Activated CD8-positive, alpha-beta T cell treated with anti-CD3 and anti-CD28 coated beads for 36 hours (primary cell): ENCODE measurements at regions of chr18 and their contacts with region 1.

Region 1: GRCh38 chr18:26383454-26384270 is 157.4 kb downstream of the TAF4B start:
- DNase-seq: peak; percentile 2
- ATAC-seq: peak; percentile 65
- H3K4me3 Mint-ChIP-seq: no peak overlapping the region
- H3K27ac Mint-ChIP-seq: no peak overlapping the region
- H3K4me1 Mint-ChIP-seq: no peaks in the 10 kb centered on the region
- H3K27me3 Mint-ChIP-seq: no peaks in the 10 kb centered on the region
- CTCF ChIP-seq: peak; percentile 79

Region 2: GRCh38 chr18:26370037-26370436 is 13.6 kb before region 1 on chr18:
- CTCF ChIA-PET with region 1: interaction called, 17 read pairs
- POLR2A ChIA-PET with region 1: no interaction called
- intact Hi-C with region 1: no loop called
- DNase-seq: no peak
- ATAC-seq: no peak
- H3K4me3 Mint-ChIP-seq: no peak overlapping the region
- H3K27ac Mint-ChIP-seq: no peak overlapping the region
- H3K4me1 Mint-ChIP-seq: no peaks in the 10 kb centered on the region
- H3K27me3 Mint-ChIP-seq: no peaks in the 10 kb centered on the region
- CTCF ChIP-seq: no peak

Region 3: GRCh38 chr18:26397019-26397418 is 13.4 kb after region 1 on chr18:
- CTCF ChIA-PET with region 1: interaction called, 14 read pairs
- POLR2A ChIA-PET with region 1: no interaction called
- intact Hi-C with region 1: no loop called
- DNase-seq: no peak
- ATAC-seq: no peak
- H3K4me3 Mint-ChIP-seq: no peak overlapping the region
- H3K27ac Mint-ChIP-seq: no peak overlapping the region
- H3K4me1 Mint-ChIP-seq: peaks cover 3% of the 10 kb centered on the region
- H3K27me3 Mint-ChIP-seq: no peaks in the 10 kb centered on the region
- CTCF ChIP-seq: no peak

Region 4: GRCh38 chr18:26405190-26405801 is 21.6 kb after region 1 on chr18:
- CTCF ChIA-PET with region 1: interaction called, 11 read pairs
- POLR2A ChIA-PET with region 1: no interaction called
- intact Hi-C with region 1: no loop called
- DNase-seq: peak; percentile 30
- ATAC-seq: no peak
- H3K4me3 Mint-ChIP-seq: no peak overlapping the region
- H3K27ac Mint-ChIP-seq: no peak overlapping the region
- H3K4me1 Mint-ChIP-seq: no peaks in the 10 kb centered on the region
- H3K27me3 Mint-ChIP-seq: no peaks in the 10 kb centered on the region
- CTCF ChIP-seq: no peak